IMR-90 (cell line): ENCODE measurements at regions of chr12 and their contacts with region 1.

Region 1: DNA sequence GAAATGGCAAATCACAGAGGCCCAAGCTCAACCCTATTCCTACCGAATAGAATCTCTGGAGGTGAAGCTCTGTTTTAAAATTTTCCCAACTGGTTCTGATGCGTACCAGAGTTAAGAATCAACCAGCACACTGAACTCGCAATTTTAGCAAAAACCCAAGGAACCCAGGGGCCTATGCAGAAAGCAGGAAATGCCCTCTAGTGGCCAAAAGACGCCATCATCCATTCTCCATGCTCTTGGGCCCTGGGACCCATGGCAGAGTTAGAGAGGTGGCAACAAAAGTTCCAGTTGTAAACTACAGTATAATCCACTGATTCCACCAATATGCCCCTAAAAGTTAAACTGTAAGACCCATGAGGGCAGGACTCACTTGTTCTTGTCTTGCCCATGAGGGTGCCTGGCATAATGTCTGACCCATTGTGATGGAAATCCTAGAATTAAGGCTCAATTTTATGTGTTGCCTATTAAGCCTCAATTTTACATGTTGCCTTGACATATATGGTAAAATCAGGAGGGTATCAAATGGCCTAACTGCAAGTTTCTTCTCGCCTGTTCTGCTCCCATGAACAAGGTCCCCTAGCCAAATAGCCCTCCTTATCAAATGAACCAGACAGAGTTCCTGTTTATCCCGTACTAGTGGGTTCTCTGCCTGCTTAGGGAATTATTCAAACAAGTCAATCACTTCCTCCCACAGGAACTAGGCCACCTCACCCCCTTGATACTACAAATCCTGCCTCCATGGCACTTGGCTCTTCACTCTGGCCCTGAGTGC is 137.5 kb upstream of the CPM start:
- DNase-seq: peak; percentile 71
- ATAC-seq: peak; percentile 95
- H3K4me3 ChIP-seq: no peak overlapping the region
- H3K27ac ChIP-seq: no peak overlapping the region
- H3K4me1 ChIP-seq: peaks cover 7% of the 10 kb centered on the region
- H3K27me3 ChIP-seq: no peaks in the 10 kb centered on the region; the same call in 1 of the 2 replicates
- CTCF ChIP-seq: peak; percentile 94
- POLR2A ChIP-seq: 0 out of 2 replicates have a peak, but pooled peaks have one; percentile 33
- RAD21 ChIP-seq: peak; percentile 92

Region 2: GRCh38 chr12:68784015-68784414 is 286.5 kb before region 1 on chr12:
- CTCF ChIA-PET with region 1: no interaction called
- POLR2A ChIA-PET with region 1: no interaction called
- dilution Hi-C with region 1: no loop called
- in situ Hi-C with region 1: no loop called
- intact Hi-C with region 1: no loop called
- DNase-seq: no peak
- ATAC-seq: no peak
- H3K4me3 ChIP-seq: no peak overlapping the region
- H3K27ac ChIP-seq: no peak overlapping the region
- H3K4me1 ChIP-seq: peaks cover 6% of the 10 kb centered on the region
- H3K27me3 ChIP-seq: no peaks in the 10 kb centered on the region
- CTCF ChIP-seq: no peak
- POLR2A ChIP-seq: no peak
- RAD21 ChIP-seq: no peak

Region 3: GRCh38 chr12:68831272-68831671 is 239.2 kb before region 1 on chr12:
- CTCF ChIA-PET with region 1: no interaction called
- POLR2A ChIA-PET with region 1: no interaction called
- dilution Hi-C with region 1: no loop called
- in situ Hi-C with region 1: no loop called
- intact Hi-C with region 1: loop called (anchors 1 kb)
- DNase-seq: no peak
- ATAC-seq: no peak
- H3K4me3 ChIP-seq: no peak overlapping the region
- H3K27ac ChIP-seq: no peak overlapping the region
- H3K4me1 ChIP-seq: peaks cover 2% of the 10 kb centered on the region
- H3K27me3 ChIP-seq: no peaks in the 10 kb centered on the region
- CTCF ChIP-seq: no peak
- POLR2A ChIP-seq: no peak
- RAD21 ChIP-seq: no peak

Region 4: GRCh38 chr12:68863109-68863770 is 207.3 kb before region 1 on chr12:
- CTCF ChIA-PET with region 1: interaction called, 7 read pairs
- POLR2A ChIA-PET with region 1: no interaction called
- dilution Hi-C with region 1: no loop called
- in situ Hi-C with region 1: no loop called
- intact Hi-C with region 1: loop called (anchors 1 kb)
- DNase-seq: no peak
- ATAC-seq: no peak; the same call in 1 of the 2 replicates
- H3K4me3 ChIP-seq: no peak overlapping the region
- H3K27ac ChIP-seq: no peak overlapping the region
- H3K4me1 ChIP-seq: no peaks in the 10 kb centered on the region
- H3K27me3 ChIP-seq: no peaks in the 10 kb centered on the region
- CTCF ChIP-seq: no peak
- POLR2A ChIP-seq: no peak
- RAD21 ChIP-seq: no peak

Region 5: DNA sequence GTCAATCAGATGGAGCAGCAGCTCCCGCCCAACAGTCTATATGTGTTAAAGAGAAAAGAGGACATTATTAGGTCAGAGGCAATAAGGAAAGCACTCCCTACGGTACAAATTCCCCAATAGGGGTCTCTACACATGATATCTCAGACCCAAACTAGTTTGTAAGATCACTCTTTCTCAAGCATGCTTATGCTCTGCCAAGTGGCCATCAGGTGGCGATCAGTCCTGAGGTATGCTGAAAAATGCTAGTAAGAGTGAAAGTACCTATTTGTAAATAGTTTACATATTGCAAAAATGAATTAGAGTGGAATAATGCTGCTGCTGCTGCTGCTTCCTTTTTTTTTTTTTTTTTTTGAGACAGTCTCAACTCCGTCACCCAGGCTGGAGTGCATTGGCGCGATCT is 198.6 kb before region 1 on chr12:
- CTCF ChIA-PET with region 1: interaction called, 7 read pairs
- POLR2A ChIA-PET with region 1: no interaction called
- dilution Hi-C with region 1: no loop called
- in situ Hi-C with region 1: loop called (anchors 5 kb)
- intact Hi-C with region 1: no loop called
- DNase-seq: peak; percentile 28
- ATAC-seq: peak; percentile 40; the same call in 1 of the 2 replicates
- H3K4me3 ChIP-seq: no peak overlapping the region
- H3K27ac ChIP-seq: no peak overlapping the region
- H3K4me1 ChIP-seq: no peaks in the 10 kb centered on the region
- H3K27me3 ChIP-seq: no peaks in the 10 kb centered on the region; the same call in 1 of the 2 replicates
- CTCF ChIP-seq: peak; percentile 33; the same call in 1 of the 2 replicates
- POLR2A ChIP-seq: no peak
- RAD21 ChIP-seq: peak; percentile 47

Region 6: DNA sequence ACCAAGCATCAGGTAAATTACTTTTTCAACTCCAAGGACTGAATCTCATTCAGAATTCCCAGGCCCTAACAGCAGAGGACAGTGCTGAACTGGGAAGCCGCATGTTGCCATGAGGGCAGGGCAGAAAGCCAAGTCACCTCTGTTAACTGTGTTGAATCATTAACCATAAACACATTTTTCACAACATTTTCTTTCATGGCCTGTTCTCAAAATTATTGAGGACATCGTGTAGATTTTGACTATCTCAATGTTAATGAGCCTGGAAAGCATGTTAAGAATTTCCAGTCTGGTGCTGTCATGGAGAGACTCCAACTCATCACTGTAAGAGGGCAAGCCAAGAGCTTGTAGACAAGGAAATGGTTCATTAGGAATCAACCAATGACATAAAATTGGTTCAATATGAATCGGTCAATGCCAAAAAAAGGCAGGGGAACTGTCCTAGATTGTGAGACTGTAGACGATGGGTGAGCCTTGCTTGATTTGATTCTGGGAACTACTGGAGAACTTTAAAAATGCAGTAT is 171.2 kb before region 1 on chr12:
- CTCF ChIA-PET with region 1: no interaction called
- POLR2A ChIA-PET with region 1: no interaction called
- dilution Hi-C with region 1: no loop called
- in situ Hi-C with region 1: no loop called
- intact Hi-C with region 1: loop called (anchors 1 kb)
- DNase-seq: peak; percentile 59
- ATAC-seq: peak; percentile 53
- H3K4me3 ChIP-seq: no peak overlapping the region
- H3K27ac ChIP-seq: no peak overlapping the region
- H3K4me1 ChIP-seq: peaks cover 2% of the 10 kb centered on the region; the same call in 1 of the 2 replicates
- H3K27me3 ChIP-seq: no peaks in the 10 kb centered on the region; the same call in 1 of the 2 replicates
- CTCF ChIP-seq: peak; percentile 46
- POLR2A ChIP-seq: no peak
- RAD21 ChIP-seq: peak; percentile 61

Region 7: GRCh38 chr12:68932961-68933893 is 137.3 kb before region 1 on chr12 and contains the start of gene CPM:
- CTCF ChIA-PET with region 1: no interaction called
- POLR2A ChIA-PET with region 1: no interaction called
- dilution Hi-C with region 1: no loop called
- in situ Hi-C with region 1: no loop called
- intact Hi-C with region 1: loop called (anchors 1 kb)
- DNase-seq: peak; percentile 25
- ATAC-seq: peak; percentile 99
- H3K4me3 ChIP-seq: peak within 1 kb of the TSS; percentile 58
- H3K27ac ChIP-seq: no peak within 1 kb of the TSS
- H3K4me1 ChIP-seq: no peaks in the 10 kb centered on the region
- H3K27me3 ChIP-seq: peaks cover 7% of the 10 kb centered on the region
- CTCF ChIP-seq: no peak
- POLR2A ChIP-seq: no peak
- RAD21 ChIP-seq: no peak
- total RNA-seq, gene CPM: 7.2 and 8.8 TPM in 2 replicates

Region 8: GRCh38 chr12:69157023-69157655 is 86.6 kb after region 1 on chr12:
- CTCF ChIA-PET with region 1: no interaction called
- POLR2A ChIA-PET with region 1: no interaction called
- dilution Hi-C with region 1: no loop called
- in situ Hi-C with region 1: no loop called
- intact Hi-C with region 1: loop called (anchors 2 kb)
- DNase-seq: peak; percentile 76
- ATAC-seq: peak; percentile 98
- H3K4me3 ChIP-seq: no peak overlapping the region
- H3K27ac ChIP-seq: no peak overlapping the region
- H3K4me1 ChIP-seq: no peaks in the 10 kb centered on the region; the same call in 1 of the 2 replicates
- H3K27me3 ChIP-seq: no peaks in the 10 kb centered on the region
- CTCF ChIP-seq: peak; percentile 91
- POLR2A ChIP-seq: no peak
- RAD21 ChIP-seq: peak; percentile 70

Region 9: GRCh38 chr12:69211160-69211559 is 140.7 kb after region 1 on chr12:
- CTCF ChIA-PET with region 1: no interaction called
- POLR2A ChIA-PET with region 1: no interaction called
- dilution Hi-C with region 1: no loop called
- in situ Hi-C with region 1: no loop called
- intact Hi-C with region 1: no loop called
- DNase-seq: no peak
- ATAC-seq: no peak
- H3K4me3 ChIP-seq: no peak overlapping the region
- H3K27ac ChIP-seq: no peak overlapping the region
- H3K4me1 ChIP-seq: no peaks in the 10 kb centered on the region
- H3K27me3 ChIP-seq: peaks cover 6% of the 10 kb centered on the region
- CTCF ChIP-seq: no peak
- POLR2A ChIP-seq: no peak
- RAD21 ChIP-seq: no peak

Region 10: GRCh38 chr12:69470189-69471075 is 399.9 kb after region 1 on chr12 and contains the start of gene FRS2:
- CTCF ChIA-PET with region 1: no interaction called
- POLR2A ChIA-PET with region 1: no interaction called
- dilution Hi-C with region 1: no loop called
- in situ Hi-C with region 1: no loop called
- intact Hi-C with region 1: no loop called
- DNase-seq: peak; percentile 86
- ATAC-seq: peak; percentile 93
- H3K4me3 ChIP-seq: peak within 1 kb of the TSS; percentile 87
- H3K27ac ChIP-seq: peak within 1 kb of the TSS; percentile 90
- H3K4me1 ChIP-seq: peaks cover 9% of the 10 kb centered on the region
- H3K27me3 ChIP-seq: no peaks in the 10 kb centered on the region
- CTCF ChIP-seq: peak; percentile 46
- POLR2A ChIP-seq: peak; percentile 89
- RAD21 ChIP-seq: peak; percentile 59
- total RNA-seq, gene FRS2: 58.3 and 65.8 TPM in 2 replicates